ENCODE measurements at regions of chr15 and their contacts with region 1.

Region 1: GRCh38 chr15:60362321-60363086 is 35.3 kb downstream of the ANXA2 start:
- DNase-seq: peak; percentile 49
- ATAC-seq: peak; percentile 87
- H3K4me3 Mint-ChIP-seq: no peak overlapping the region
- H3K27ac Mint-ChIP-seq: no peak overlapping the region
- H3K4me1 Mint-ChIP-seq: peaks cover 11% of the 10 kb centered on the region
- H3K27me3 Mint-ChIP-seq: no peaks in the 10 kb centered on the region
- CTCF ChIP-seq: no peak

Region 2: DNA sequence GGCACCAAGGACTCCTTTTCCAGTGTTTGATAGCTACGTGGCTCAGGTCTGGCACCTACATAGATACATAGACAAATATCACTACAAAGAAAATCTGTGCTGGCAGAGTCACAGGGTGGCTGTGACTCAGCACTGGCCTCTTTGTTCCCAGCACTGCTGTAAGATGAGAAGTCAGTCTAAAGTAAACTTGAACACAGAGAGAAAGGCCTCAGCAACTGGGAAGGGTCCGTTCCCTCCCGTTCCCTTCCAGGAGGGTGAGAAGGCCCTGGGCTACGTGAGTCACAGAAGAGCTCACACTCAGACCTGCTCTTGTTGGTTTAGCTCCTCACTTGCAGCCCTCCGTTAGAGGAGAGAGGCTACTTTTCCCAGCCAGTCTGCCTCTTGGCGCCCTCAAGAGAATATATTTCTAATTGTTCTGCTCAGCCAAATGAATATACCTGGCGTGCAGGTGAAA is 12.2 kb after region 1 on chr15:
- CTCF ChIA-PET with region 1: interaction called, 11 read pairs
- POLR2A ChIA-PET with region 1: no interaction called
- intact Hi-C with region 1: no loop called
- DNase-seq: no peak
- ATAC-seq: no peak
- H3K4me3 Mint-ChIP-seq: no peak overlapping the region
- H3K27ac Mint-ChIP-seq: no peak overlapping the region
- H3K4me1 Mint-ChIP-seq: peaks cover 13% of the 10 kb centered on the region
- H3K27me3 Mint-ChIP-seq: no peaks in the 10 kb centered on the region
- CTCF ChIP-seq: no peak

Region 3: GRCh38 chr15:60444289-60444912 is 81.9 kb after region 1 on chr15:
- CTCF ChIA-PET with region 1: interaction called, 19 read pairs
- POLR2A ChIA-PET with region 1: no interaction called
- intact Hi-C with region 1: no loop called
- DNase-seq: no peak
- ATAC-seq: no peak
- H3K4me3 Mint-ChIP-seq: no peak overlapping the region
- H3K27ac Mint-ChIP-seq: no peak overlapping the region
- H3K4me1 Mint-ChIP-seq: peaks cover 3% of the 10 kb centered on the region
- H3K27me3 Mint-ChIP-seq: no peaks in the 10 kb centered on the region
- CTCF ChIP-seq: no peak

Region 4: GRCh38 chr15:60507596-60508424 is 145.3 kb after region 1 on chr15:
- CTCF ChIA-PET with region 1: interaction called, 12 read pairs
- POLR2A ChIA-PET with region 1: no interaction called
- intact Hi-C with region 1: no loop called
- DNase-seq: peak; percentile 69
- ATAC-seq: peak; percentile 81
- H3K4me3 Mint-ChIP-seq: no peak overlapping the region
- H3K27ac Mint-ChIP-seq: peak overlapping the region; percentile 73
- H3K4me1 Mint-ChIP-seq: peaks cover 48% of the 10 kb centered on the region
- H3K27me3 Mint-ChIP-seq: no peaks in the 10 kb centered on the region
- CTCF ChIP-seq: peak; percentile 94

Measured in activated CD8-positive, alpha-beta T cell treated with anti-CD3 and anti-CD28 coated beads for 36 hours (primary cell).